Activated T-helper 1 cell treated with anti-CD3 and anti-CD28 coated beads, Interleukin-12 subunit alpha, Interleukin-12 subunit beta, Interleukin-2, Interleukin-4 antibody, amounts not matched to agents 30 ng/mL and 10 ng/mL and 1 ng/mL, durations not matched to agents 14 hours and 24 hours and 36 hours (primary cell): ENCODE measurements at regions of chr2 and their contacts with region 1.

Region 1: DNA sequence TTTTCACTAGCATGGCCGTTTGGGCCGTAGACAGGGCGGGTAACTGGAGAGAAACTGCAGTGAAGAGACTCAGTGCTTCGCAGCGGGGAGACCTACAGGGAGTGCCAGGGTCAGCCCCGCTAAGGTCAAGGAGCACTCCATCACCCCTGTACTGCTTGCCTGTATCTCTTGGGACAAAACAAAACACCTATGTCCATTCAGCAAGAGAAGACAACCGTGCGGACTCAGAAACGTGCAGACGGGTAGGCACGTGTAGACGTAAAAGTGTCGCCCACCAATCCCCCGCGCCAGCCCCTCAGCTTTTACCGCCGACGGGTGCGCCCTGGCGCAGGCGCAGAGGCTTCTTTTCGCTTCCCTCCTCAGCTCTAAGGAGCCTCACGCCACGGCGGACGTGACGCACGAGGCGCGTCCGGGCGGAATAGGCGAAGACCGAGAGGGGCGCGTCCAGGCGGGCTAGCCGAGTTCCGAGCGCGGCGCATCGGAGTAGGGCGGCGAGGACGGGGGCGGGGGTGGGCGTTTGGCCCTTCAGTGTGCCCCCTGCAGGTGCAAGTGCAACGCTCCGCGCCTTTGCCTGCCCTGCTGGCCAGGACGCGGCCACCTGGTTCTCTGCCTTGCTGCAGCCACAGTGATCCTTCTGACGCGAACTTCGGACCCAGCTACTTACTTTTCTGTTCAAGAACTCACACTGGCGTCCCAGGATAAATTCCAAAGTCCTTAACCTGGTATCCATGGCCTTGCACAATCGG is 3.3 kb upstream of the SOS1 start:
- DNase-seq: peak; percentile 94
- H3K4me3 Mint-ChIP-seq: peak overlapping the region; percentile 99
- H3K27ac Mint-ChIP-seq: peak overlapping the region; percentile 100
- H3K4me1 Mint-ChIP-seq: peaks cover 67% of the 10 kb centered on the region
- H3K27me3 Mint-ChIP-seq: no peaks in the 10 kb centered on the region

Region 2: DNA sequence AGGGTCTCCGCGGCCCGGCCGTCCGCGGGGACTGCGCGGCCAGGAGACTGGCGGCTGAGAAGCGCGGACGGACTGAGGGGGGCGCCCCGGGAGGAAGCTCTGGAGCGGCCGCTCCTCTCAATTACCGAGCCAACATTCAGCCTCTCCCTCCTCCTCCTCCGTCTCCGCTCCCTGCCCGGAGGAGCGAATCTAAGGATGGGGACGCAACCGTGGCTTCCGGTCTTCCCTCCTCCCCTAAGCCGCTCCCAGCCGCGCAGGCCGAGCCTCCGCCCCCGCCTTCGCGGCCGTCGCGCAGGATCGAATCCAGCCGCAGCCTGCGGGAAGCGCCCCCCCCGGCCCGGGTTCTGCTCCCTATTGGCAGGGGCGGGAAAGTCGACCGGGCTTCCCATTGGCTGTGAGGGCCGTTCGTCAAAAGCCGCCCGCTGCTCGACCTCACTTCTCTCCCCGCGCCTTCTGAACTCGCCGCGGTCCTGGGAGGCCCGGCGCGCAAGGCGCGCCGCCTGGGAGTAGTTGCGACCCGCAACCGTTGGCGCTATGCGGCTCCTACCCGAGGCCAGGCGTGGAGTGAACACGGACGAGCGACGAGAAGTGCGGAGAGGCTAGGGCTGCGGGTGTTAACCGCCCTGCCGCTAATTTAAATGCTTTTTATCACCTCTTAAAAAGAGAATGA is 521.3 kb before region 1 on chr2 and contains the start of gene HNRNPLL:
- intact Hi-C with region 1: loop called (anchors 2 kb)
- DNase-seq: peak; percentile 94
- H3K4me3 Mint-ChIP-seq: peak within 1 kb of the TSS; percentile 91
- H3K27ac Mint-ChIP-seq: peak within 1 kb of the TSS; percentile 92
- H3K4me1 Mint-ChIP-seq: peaks cover 54% of the 10 kb centered on the region
- H3K27me3 Mint-ChIP-seq: no peaks in the 10 kb centered on the region
- total RNA-seq, gene HNRNPLL: 85.8 and 91.5 TPM in 2 replicates

Region 3: DNA sequence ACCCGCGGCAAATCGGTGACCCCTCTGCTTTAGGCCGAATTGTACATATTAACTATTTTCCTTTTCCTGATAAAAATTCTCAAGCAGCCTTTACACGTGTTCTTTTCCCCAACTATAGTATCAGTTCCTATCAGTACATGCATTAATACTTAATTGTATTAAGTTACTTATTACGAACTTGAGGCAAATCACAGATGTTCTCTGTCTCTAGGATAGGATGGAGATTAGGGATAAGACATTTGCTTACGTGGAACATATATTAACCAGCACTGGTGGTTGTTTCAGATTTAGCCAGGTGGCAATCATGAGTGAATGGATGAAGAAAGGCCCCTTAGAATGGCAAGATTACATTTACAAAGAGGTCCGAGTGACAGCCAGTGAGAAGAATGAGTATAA is 345.5 kb before region 1 on chr2:
- intact Hi-C with region 1: loop called (anchors 2 kb)
- DNase-seq: no peak
- H3K4me3 Mint-ChIP-seq: peak overlapping the region; percentile 100
- H3K27ac Mint-ChIP-seq: peak overlapping the region; percentile 100
- H3K4me1 Mint-ChIP-seq: peaks cover 16% of the 10 kb centered on the region
- H3K27me3 Mint-ChIP-seq: peaks cover 13% of the 10 kb centered on the region

Region 4: GRCh38 chr2:39094852-39095306 is 29.3 kb before region 1 on chr2:
- intact Hi-C with region 1: loop called (anchors 1 kb)
- DNase-seq: no peak
- H3K4me3 Mint-ChIP-seq: no peak overlapping the region
- H3K27ac Mint-ChIP-seq: peak overlapping the region; percentile 88
- H3K4me1 Mint-ChIP-seq: peaks cover 64% of the 10 kb centered on the region
- H3K27me3 Mint-ChIP-seq: no peaks in the 10 kb centered on the region

Region 5: DNA sequence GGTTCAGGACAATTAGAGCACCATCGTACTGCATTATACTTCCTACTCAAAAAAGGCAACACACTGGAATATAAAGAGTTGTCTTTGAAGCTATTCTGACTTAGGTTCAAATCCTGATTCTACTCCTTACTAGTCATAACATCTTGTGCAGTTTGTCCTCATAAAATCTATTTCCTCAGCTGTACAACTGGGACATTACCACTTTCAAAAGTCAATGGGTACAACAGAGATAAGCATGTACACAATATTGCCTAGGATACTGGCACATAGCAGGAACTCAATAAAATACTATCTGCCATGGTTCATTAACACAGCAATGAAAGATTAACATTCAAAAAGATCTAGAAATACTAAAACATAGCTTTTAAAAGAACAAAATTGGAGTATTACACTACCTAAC is 14.6 kb before region 1 on chr2:
- intact Hi-C with region 1: no loop called
- DNase-seq: no peak
- H3K4me3 Mint-ChIP-seq: no peak overlapping the region
- H3K27ac Mint-ChIP-seq: no peak overlapping the region
- H3K4me1 Mint-ChIP-seq: peaks cover 62% of the 10 kb centered on the region
- H3K27me3 Mint-ChIP-seq: no peaks in the 10 kb centered on the region

Region 6: GRCh38 chr2:39216346-39217191 is 92.4 kb after region 1 on chr2:
- intact Hi-C with region 1: loop called (anchors 1 kb)
- DNase-seq: peak; percentile 85
- H3K4me3 Mint-ChIP-seq: peak overlapping the region; percentile 30
- H3K27ac Mint-ChIP-seq: peak overlapping the region; percentile 91
- H3K4me1 Mint-ChIP-seq: peaks cover 77% of the 10 kb centered on the region
- H3K27me3 Mint-ChIP-seq: no peaks in the 10 kb centered on the region

Region 7: DNA sequence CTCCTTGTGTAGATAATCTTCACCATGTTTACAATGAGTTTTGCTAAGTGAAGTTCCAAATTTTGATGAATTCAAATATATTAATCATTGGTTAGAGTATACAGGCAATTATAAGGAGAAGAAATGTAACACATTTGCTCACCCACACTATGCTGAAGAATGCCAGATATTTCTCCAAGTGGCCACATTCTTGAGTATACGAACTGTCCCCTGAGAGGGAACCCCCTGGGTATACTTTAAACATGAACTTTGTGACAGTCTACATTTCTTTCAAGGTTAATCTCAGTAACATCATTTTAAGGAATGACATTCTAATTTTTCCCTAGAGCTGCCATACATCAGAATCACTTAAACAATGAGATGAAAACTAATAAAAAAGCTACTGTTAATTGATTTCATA is 159.4 kb after region 1 on chr2:
- intact Hi-C with region 1: no loop called
- DNase-seq: no peak
- H3K4me3 Mint-ChIP-seq: no peak overlapping the region
- H3K27ac Mint-ChIP-seq: no peak overlapping the region
- H3K4me1 Mint-ChIP-seq: no peaks in the 10 kb centered on the region
- H3K27me3 Mint-ChIP-seq: no peaks in the 10 kb centered on the region

Region 8: GRCh38 chr2:39408316-39409136 is 284.4 kb after region 1 on chr2:
- intact Hi-C with region 1: no loop called
- DNase-seq: no peak
- H3K4me3 Mint-ChIP-seq: no peak overlapping the region
- H3K27ac Mint-ChIP-seq: peak overlapping the region; percentile 54
- H3K4me1 Mint-ChIP-seq: peaks cover 39% of the 10 kb centered on the region
- H3K27me3 Mint-ChIP-seq: no peaks in the 10 kb centered on the region

Region 9: DNA sequence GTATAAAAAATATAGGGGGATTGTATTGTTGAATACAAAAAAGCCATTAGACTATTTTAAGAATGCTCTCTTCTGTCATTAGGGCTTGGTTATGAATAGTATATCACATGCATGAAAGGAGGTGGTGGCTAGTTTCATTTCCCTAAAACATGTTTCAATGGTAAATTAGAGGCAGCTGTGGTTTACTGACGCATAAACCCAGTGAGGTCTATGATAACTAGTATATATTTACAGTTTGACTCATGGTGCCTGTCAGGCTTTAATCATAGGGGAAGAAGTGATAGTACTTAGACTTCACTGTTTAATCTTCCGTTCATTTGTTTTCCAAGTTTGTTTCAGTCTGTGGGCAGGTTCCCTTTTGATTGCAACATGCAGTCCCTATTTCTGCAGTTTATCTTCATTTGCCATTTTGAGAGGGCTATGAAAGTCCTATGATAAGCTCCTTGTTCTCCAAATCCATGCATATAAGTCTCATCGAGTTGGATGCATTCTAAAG is 368.0 kb after region 1 on chr2:
- intact Hi-C with region 1: loop called (anchors 1 kb)
- DNase-seq: peak; percentile 23
- H3K4me3 Mint-ChIP-seq: peak overlapping the region; percentile 55
- H3K27ac Mint-ChIP-seq: peak overlapping the region; percentile 76
- H3K4me1 Mint-ChIP-seq: peaks cover 52% of the 10 kb centered on the region
- H3K27me3 Mint-ChIP-seq: peaks cover 13% of the 10 kb centered on the region